Activated B cell treated with CpG ODN at 0.5 μM for 24 hours (primary cell): ENCODE measurements at regions of chr1 and their contacts with region 1.

Region 1: GRCh38 chr1:80427881-80428280 is 1372.9 kb upstream of the ADGRL2 start:
- DNase-seq: no peak
- ATAC-seq: no peak
- H3K4me3 Mint-ChIP-seq: no peak overlapping the region
- H3K27ac Mint-ChIP-seq: no peak overlapping the region
- H3K4me1 Mint-ChIP-seq: no peaks in the 10 kb centered on the region
- H3K27me3 Mint-ChIP-seq: no peaks in the 10 kb centered on the region
- CTCF ChIP-seq: no peak

Region 2: GRCh38 chr1:79556189-79556588 is 871.7 kb before region 1 on chr1:
- CTCF ChIA-PET with region 1: no interaction called
- POLR2A ChIA-PET with region 1: no interaction called
- intact Hi-C with region 1: no loop called
- DNase-seq: no peak
- ATAC-seq: no peak
- H3K4me3 Mint-ChIP-seq: no peak overlapping the region
- H3K27ac Mint-ChIP-seq: no peak overlapping the region
- H3K4me1 Mint-ChIP-seq: no peaks in the 10 kb centered on the region
- H3K27me3 Mint-ChIP-seq: no peaks in the 10 kb centered on the region
- CTCF ChIP-seq: no peak

Region 3: DNA sequence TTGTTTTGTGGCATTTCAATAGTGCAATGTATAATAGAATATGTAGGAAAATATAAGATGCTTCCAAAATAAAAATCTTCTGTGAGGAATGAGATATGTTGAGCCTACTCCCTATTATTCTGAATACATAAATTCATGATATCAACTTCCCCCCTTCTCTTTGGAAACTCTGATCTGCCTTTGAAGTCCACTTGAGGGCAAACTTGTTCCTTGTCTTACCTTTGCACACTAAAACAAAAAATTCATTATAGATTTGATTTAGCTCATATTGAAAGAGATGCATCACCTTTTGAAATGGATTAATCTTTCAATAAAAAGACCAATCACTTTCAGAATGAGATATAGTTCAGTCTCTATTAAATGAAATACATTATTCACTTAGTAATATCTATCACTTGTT is 840.7 kb before region 1 on chr1:
- CTCF ChIA-PET with region 1: no interaction called
- POLR2A ChIA-PET with region 1: no interaction called
- intact Hi-C with region 1: loop called (anchors 10 kb)
- DNase-seq: no peak
- ATAC-seq: no peak
- H3K4me3 Mint-ChIP-seq: no peak overlapping the region
- H3K27ac Mint-ChIP-seq: no peak overlapping the region
- H3K4me1 Mint-ChIP-seq: peaks cover 6% of the 10 kb centered on the region
- H3K27me3 Mint-ChIP-seq: no peaks in the 10 kb centered on the region
- CTCF ChIP-seq: no peak